CD8-positive, alpha-beta T cell (primary cell): ENCODE measurements at regions of chr1 and their contacts with region 1.

Region 1: GRCh38 chr1:67685067-67685557 is at the start of gene GADD45A:
- DNase-seq: peak; percentile 85 to 98 (median 93)
- ATAC-seq: peak; percentile 85
- H3K4me3 ChIP-seq: peak within 1 kb of the TSS; percentile 79 to 88
- H3K4me3 Mint-ChIP-seq: peak within 1 kb of the TSS; percentile 100
- H3K27ac ChIP-seq: peak within 1 kb of the TSS; percentile 61 to 66
- H3K27ac Mint-ChIP-seq: peak within 1 kb of the TSS; percentile 96
- H3K4me1 ChIP-seq: peaks cover 16% of the 10 kb centered on the region
- H3K4me1 Mint-ChIP-seq: peaks cover 25% of the 10 kb centered on the region
- H3K27me3 ChIP-seq: no peaks in the 10 kb centered on the region
- H3K27me3 Mint-ChIP-seq: no peaks in the 10 kb centered on the region
- CTCF ChIP-seq: no peak
- total RNA-seq, gene GADD45A: 194 to 196 TPM

Region 2: DNA sequence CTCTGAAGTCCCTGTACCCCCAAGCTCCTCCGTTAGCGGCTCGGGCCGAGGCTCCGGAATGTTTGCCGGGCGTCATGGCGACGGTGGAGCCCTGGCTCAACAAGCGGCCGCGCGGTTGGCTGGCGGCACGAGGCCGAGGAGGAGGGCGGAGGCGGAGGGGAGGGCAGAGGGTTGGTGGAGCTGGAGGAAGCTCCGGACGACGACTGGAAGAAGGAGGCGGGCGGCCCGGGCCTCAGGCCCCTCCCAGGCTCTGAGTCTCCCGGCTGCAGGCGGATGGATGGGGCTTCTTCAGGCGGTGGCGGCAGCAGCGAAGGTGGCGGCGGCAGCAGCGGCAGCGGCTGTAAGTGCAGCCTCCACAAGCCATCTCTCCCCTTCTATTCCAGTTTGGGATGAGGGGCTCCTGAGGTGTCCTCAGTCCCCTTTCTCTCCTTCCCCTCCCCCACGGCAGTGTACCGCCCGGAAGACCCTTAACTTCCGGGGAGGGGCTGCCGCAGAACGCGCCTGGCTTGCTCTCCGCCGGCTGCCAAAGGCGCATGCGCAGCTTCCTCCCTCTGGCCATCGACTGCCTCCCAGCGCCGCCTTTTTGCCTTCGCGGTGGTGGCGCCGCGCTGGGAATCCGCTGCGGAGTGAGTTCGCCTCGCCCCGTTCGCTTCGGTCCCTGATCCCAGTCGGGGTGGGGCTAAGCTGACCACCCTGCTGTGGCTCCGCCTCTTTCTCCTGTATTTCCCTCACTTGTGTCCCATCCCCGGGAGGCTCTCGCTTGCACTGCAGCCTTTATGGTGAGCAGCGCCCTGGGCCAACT is 760.2 kb before region 1 on chr1 and contains the starts of genes DNAI4 and MIER1:
- CTCF ChIA-PET with region 1: no interaction called
- POLR2A ChIA-PET with region 1: no interaction called
- intact Hi-C with region 1: loop called (anchors 1 to 5 kb)
- DNase-seq: peak; percentile 93 to 98 (median 96)
- ATAC-seq: peak; percentile 91
- H3K4me3 ChIP-seq: peak within 1 kb of the TSS; percentile 80 to 99
- H3K4me3 Mint-ChIP-seq: peak within 1 kb of the TSS; percentile 96
- H3K27ac ChIP-seq: peak within 1 kb of the TSS; percentile 95 to 100
- H3K27ac Mint-ChIP-seq: peak within 1 kb of the TSS; percentile 93
- H3K4me1 ChIP-seq: peaks cover 25% of the 10 kb centered on the region
- H3K4me1 Mint-ChIP-seq: peaks cover 46% of the 10 kb centered on the region
- H3K27me3 ChIP-seq: no peaks in the 10 kb centered on the region
- H3K27me3 Mint-ChIP-seq: no peaks in the 10 kb centered on the region
- CTCF ChIP-seq: no peak
- total RNA-seq, gene DNAI4: 4.9 to 5.1 TPM
- total RNA-seq, gene MIER1: 94.5 to 96.5 TPM

Region 3: GRCh38 chr1:67174716-67175284 is 510.3 kb before region 1 on chr1:
- CTCF ChIA-PET with region 1: interaction called, 3 read pairs
- POLR2A ChIA-PET with region 1: no interaction called
- intact Hi-C with region 1: loop called in 1 of 2 experiments (anchors 10 kb)
- DNase-seq: no peak
- ATAC-seq: no peak
- H3K4me3 ChIP-seq: no peak overlapping the region
- H3K4me3 Mint-ChIP-seq: no peak overlapping the region
- H3K27ac ChIP-seq: no peak overlapping the region
- H3K27ac Mint-ChIP-seq: no peak overlapping the region
- H3K4me1 ChIP-seq: peaks cover 35% of the 10 kb centered on the region
- H3K4me1 Mint-ChIP-seq: peaks cover 42% of the 10 kb centered on the region
- H3K27me3 ChIP-seq: no peaks in the 10 kb centered on the region
- H3K27me3 Mint-ChIP-seq: no peaks in the 10 kb centered on the region
- CTCF ChIP-seq: no peak

Region 4: DNA sequence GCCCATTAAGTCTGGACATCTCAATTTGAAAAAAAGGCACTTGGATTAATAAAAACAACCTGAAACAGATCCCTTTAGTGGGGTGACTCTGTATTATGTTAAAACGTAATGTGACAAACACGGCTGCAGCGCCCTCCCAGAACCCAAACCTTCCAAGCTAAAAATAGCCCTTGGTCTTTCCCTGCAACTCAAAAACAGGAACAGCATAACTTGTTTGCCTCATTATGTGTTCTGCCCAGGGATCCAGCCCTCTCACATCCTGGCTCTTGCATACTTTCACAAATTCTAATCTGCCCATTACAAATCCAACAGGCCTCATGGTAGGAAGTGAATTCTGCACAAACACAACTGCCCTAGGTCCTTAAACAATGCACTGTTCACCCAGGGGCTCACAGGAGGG is 94.8 kb before region 1 on chr1:
- CTCF ChIA-PET with region 1: no interaction called
- POLR2A ChIA-PET with region 1: no interaction called
- intact Hi-C with region 1: no loop called
- DNase-seq: no peak
- ATAC-seq: no peak
- H3K4me3 ChIP-seq: no peak overlapping the region
- H3K4me3 Mint-ChIP-seq: no peak overlapping the region
- H3K27ac ChIP-seq: no peak overlapping the region
- H3K27ac Mint-ChIP-seq: no peak overlapping the region
- H3K4me1 ChIP-seq: no peaks in the 10 kb centered on the region
- H3K4me1 Mint-ChIP-seq: no peaks in the 10 kb centered on the region
- H3K27me3 ChIP-seq: no peaks in the 10 kb centered on the region
- H3K27me3 Mint-ChIP-seq: peaks cover 5% of the 10 kb centered on the region
- CTCF ChIP-seq: no peak

Region 5: GRCh38 chr1:67674260-67675011 is 10.7 kb before region 1 on chr1:
- CTCF ChIA-PET with region 1: interaction called, 3 read pairs
- POLR2A ChIA-PET with region 1: interaction called, 46 read pairs
- intact Hi-C with region 1: loop called in 1 of 2 experiments (anchors 1 kb)
- DNase-seq: peak; percentile 4 to 87 (median 49)
- ATAC-seq: peak; percentile 87
- H3K4me3 ChIP-seq: no peak overlapping the region
- H3K4me3 Mint-ChIP-seq: peak overlapping the region; percentile 53
- H3K27ac ChIP-seq: peak overlapping the region in 1 of 2 experiments; percentile 13
- H3K27ac Mint-ChIP-seq: peak overlapping the region; percentile 68
- H3K4me1 ChIP-seq: peaks cover 21% of the 10 kb centered on the region
- H3K4me1 Mint-ChIP-seq: peaks cover 22% of the 10 kb centered on the region
- H3K27me3 ChIP-seq: peaks cover 0 to 3% of the 10 kb centered on the region in 2 experiments
- H3K27me3 Mint-ChIP-seq: peaks cover 2% of the 10 kb centered on the region
- CTCF ChIP-seq: no peak

Region 6: DNA sequence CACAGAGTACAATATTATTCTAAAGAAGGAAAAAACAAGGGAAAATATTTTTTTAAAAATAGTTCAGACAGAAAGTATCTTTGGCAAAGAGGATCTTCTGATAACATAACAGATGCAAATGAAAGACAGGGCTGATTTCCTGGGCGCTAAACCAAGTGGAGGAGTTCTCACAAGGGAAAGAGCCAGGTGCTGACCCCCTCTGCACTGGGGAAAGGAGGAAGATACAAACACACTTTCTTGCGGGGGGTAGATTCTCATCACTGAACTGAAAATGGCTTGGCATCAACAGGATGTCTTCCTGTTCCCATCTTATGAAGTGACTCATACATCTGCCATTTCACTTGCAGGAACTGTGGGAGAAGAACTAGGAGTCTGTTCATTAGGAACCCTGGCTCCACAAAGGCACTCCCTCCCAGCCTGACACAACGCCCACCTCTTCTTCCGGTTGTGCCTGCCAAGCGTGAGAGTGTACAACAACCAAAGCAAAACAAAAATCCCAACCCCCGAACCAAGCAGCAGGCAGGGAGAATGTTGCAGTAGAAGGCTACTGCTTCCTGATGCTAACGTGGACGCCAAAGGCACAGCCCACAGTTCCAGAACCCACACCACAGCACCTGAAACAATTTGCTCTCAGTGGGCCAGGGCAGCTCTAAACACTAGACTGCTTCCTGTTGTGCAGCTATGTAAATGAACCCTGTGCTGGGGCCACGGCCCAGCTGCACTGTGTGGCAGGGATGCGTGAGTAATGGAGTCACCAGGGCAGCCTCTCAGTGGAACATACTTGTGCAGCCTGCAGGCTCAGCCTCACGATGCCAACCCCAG is 50.9 kb after region 1 on chr1:
- CTCF ChIA-PET with region 1: interaction called, 3 read pairs
- POLR2A ChIA-PET with region 1: interaction called, 19 read pairs
- intact Hi-C with region 1: loop called in 1 of 2 experiments (anchors 2 kb)
- DNase-seq: peak in 7 of 9 experiments; percentile 11 to 71 (median 28)
- ATAC-seq: peak; percentile 81
- H3K4me3 ChIP-seq: peak overlapping the region; percentile 8 to 22
- H3K4me3 Mint-ChIP-seq: peak overlapping the region; percentile 72
- H3K27ac ChIP-seq: peak overlapping the region in 1 of 2 experiments; percentile 52
- H3K27ac Mint-ChIP-seq: peak overlapping the region; percentile 88
- H3K4me1 ChIP-seq: peaks cover 15% of the 10 kb centered on the region
- H3K4me1 Mint-ChIP-seq: peaks cover 19% of the 10 kb centered on the region
- H3K27me3 ChIP-seq: no peaks in the 10 kb centered on the region
- H3K27me3 Mint-ChIP-seq: peaks cover 4% of the 10 kb centered on the region
- CTCF ChIP-seq: no peak